ENCODE measurements at regions of chr1 and their contacts with region 1.

Region 1: DNA sequence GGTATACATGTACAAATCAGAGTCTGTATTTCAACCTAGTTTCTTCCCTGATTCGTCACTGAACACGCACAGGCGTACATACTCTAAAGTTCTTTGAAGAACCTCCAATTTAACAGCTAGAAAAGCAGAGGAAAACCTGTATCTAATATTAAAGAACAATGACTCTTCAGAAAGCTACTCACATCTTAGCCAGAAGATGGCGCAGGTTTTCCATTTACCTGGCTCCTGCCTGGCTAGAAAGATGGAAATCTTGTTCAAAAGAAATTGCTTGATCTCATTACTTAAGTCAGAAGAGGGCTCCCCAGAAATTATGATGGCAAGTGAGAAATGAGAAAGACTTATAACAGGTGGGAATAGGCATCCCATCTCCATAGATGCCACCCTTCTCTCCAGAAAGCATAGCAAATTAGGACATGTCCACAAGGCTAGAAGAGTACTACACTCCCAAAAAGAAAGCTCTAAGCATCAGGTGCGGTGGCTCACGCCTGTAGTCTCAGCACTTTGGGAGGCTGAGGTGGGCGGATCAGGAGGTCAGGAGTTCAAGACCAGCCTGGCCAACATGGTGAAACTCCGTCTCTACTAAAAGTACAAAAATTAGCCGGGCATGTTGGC is 19.0 kb upstream of the L1TD1 start:
- DNase-seq: peak; percentile 22 to 77 (median 40)
- H3K4me3 ChIP-seq: no peak overlapping the region
- H3K27ac ChIP-seq: no peak overlapping the region
- H3K4me1 ChIP-seq: no peaks in the 10 kb centered on the region
- H3K27me3 ChIP-seq: peaks cover 9% of the 10 kb centered on the region
- CTCF ChIP-seq: peak; percentile 55 to 83 (median 78)
- POLR2A ChIP-seq: no peak

Region 2: GRCh38 chr1:62131093-62131725 is 44.5 kb before region 1 on chr1:
- intact Hi-C with region 1: no loop called
- DNase-seq: peak; percentile 34 to 76 (median 45)
- H3K4me3 ChIP-seq: no peak overlapping the region
- H3K27ac ChIP-seq: no peak overlapping the region
- H3K4me1 ChIP-seq: no peaks in the 10 kb centered on the region
- H3K27me3 ChIP-seq: no peaks in the 10 kb centered on the region
- CTCF ChIP-seq: peak; percentile 41 to 87 (median 66)
- POLR2A ChIP-seq: no peak

Region 3: GRCh38 chr1:62241377-62242131 is 65.9 kb after region 1 on chr1:
- intact Hi-C with region 1: no loop called
- DNase-seq: peak; percentile 20 to 69 (median 42)
- H3K4me3 ChIP-seq: no peak overlapping the region
- H3K27ac ChIP-seq: no peak overlapping the region
- H3K4me1 ChIP-seq: peaks cover 0 to 6% of the 10 kb centered on the region in 2 donors
- H3K27me3 ChIP-seq: no peaks in the 10 kb centered on the region
- CTCF ChIP-seq: no peak
- POLR2A ChIP-seq: no peak

Region 4: GRCh38 chr1:62407405-62408009 is 231.8 kb after region 1 on chr1:
- intact Hi-C with region 1: loop called (anchors 2 to 5 kb)
- DNase-seq: peak in 3 of 7 donors; percentile 22 to 27 (median 26)
- H3K4me3 ChIP-seq: no peak overlapping the region
- H3K27ac ChIP-seq: no peak overlapping the region
- H3K4me1 ChIP-seq: no peaks in the 10 kb centered on the region
- H3K27me3 ChIP-seq: no peaks in the 10 kb centered on the region
- CTCF ChIP-seq: peak; percentile 62 to 89 (median 78)
- POLR2A ChIP-seq: no peak

Region 5: GRCh38 chr1:62457955-62458354 is 282.3 kb after region 1 on chr1:
- intact Hi-C with region 1: no loop called
- DNase-seq: no peak
- H3K4me3 ChIP-seq: no peak overlapping the region
- H3K27ac ChIP-seq: no peak overlapping the region
- H3K4me1 ChIP-seq: no peaks in the 10 kb centered on the region
- H3K27me3 ChIP-seq: no peaks in the 10 kb centered on the region
- CTCF ChIP-seq: no peak
- POLR2A ChIP-seq: no peak

Region 6: GRCh38 chr1:62725255-62725654 is 549.6 kb after region 1 on chr1:
- intact Hi-C with region 1: no loop called
- DNase-seq: no peak
- H3K4me3 ChIP-seq: no peak overlapping the region
- H3K27ac ChIP-seq: no peak overlapping the region
- H3K4me1 ChIP-seq: peaks cover 0 to 23% of the 10 kb centered on the region in 2 donors
- H3K27me3 ChIP-seq: no peaks in the 10 kb centered on the region
- CTCF ChIP-seq: no peak
- POLR2A ChIP-seq: no peak

Measured in adrenal gland (tissue), 19 donors.